ENCODE measurements at regions of chr11 and their contacts with region 1.

Region 1: DNA sequence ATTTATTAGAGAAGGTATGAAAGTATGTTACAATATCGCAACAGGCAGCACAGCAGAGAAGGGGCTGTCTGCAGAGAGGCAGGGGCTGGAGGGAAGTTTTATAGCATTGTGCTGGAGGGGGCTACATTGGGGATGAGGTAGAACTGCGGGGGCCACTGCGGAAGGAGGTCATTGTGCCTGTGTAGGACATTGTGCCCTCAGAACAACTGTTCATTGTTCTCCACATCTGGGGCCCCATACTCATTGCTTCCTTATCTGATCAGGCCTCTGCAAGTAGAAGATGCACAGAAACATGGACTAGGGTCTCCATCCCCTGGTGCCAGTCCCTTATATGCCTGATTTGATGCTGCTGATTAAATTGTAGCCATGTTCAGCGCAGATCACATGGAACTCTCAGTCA is 12.1 kb downstream of the NADSYN1 start:
- DNase-seq: no peak
- H3K4me3 Mint-ChIP-seq: no peak overlapping the region
- H3K27ac Mint-ChIP-seq: peak overlapping the region; percentile 22
- H3K4me1 Mint-ChIP-seq: no peaks in the 10 kb centered on the region
- H3K27me3 Mint-ChIP-seq: no peaks in the 10 kb centered on the region

Region 2: GRCh38 chr11:71383461-71383860 is 81.6 kb before region 1 on chr11:
- intact Hi-C with region 1: no loop called
- DNase-seq: no peak
- H3K4me3 Mint-ChIP-seq: no peak overlapping the region
- H3K27ac Mint-ChIP-seq: no peak overlapping the region
- H3K4me1 Mint-ChIP-seq: no peaks in the 10 kb centered on the region
- H3K27me3 Mint-ChIP-seq: no peaks in the 10 kb centered on the region

Region 3: DNA sequence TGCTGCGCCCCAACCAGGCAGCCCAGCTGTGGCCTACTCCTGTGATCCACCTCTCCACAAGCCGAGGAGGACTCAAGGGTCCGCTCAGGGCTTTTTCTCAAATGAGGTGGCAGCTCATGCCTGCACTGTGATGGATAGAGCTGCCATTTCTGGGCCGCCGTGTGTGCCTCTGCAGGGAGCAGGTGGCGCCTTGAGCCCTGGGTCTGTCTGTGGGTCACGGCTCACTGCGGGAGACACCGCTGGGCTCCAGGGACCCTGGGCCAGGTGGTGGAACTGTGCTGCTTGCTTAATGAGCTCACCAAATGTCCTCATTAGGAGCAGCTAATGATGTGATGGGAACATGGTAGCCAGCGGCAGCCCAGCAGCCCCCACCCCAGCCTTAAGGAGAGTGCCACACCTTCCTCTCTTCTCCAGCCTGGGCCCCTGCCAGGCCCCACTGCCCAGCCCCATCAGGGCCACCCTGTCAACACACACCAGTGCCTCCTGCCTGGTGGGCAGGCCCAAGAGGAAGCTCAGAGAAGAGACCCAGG is 67.7 kb before region 1 on chr11:
- intact Hi-C with region 1: no loop called
- DNase-seq: no peak
- H3K4me3 Mint-ChIP-seq: no peak overlapping the region
- H3K27ac Mint-ChIP-seq: no peak overlapping the region
- H3K4me1 Mint-ChIP-seq: no peaks in the 10 kb centered on the region
- H3K27me3 Mint-ChIP-seq: peaks cover 1% of the 10 kb centered on the region

Region 4: GRCh38 chr11:71489311-71490048 is 24.4 kb after region 1 on chr11:
- intact Hi-C with region 1: loop called (anchors 1 kb)
- DNase-seq: peak; percentile 58
- H3K4me3 Mint-ChIP-seq: peak overlapping the region; percentile 63
- H3K27ac Mint-ChIP-seq: peak overlapping the region; percentile 94
- H3K4me1 Mint-ChIP-seq: peaks cover 31% of the 10 kb centered on the region
- H3K27me3 Mint-ChIP-seq: no peaks in the 10 kb centered on the region